A549 (cell line): ENCODE measurements at regions of chr1 and their contacts with region 1.

Region 1: GRCh38 chr1:85259118-85259911 is at the start of gene C1orf52:
- DNase-seq: peak; percentile 56 to 89
- ATAC-seq: peak; percentile 94 to 96
- H3K4me3 ChIP-seq: peak within 1 kb of the TSS; percentile 98
- H3K27ac ChIP-seq: peak within 1 kb of the TSS; percentile 89 to 90
- H3K4me1 ChIP-seq: peaks cover 4% of the 10 kb centered on the region; the same call in 1 of the 3 replicates
- CTCF ChIP-seq: peak; percentile 78
- EP300 ChIP-seq: no peak
- POLR2A ChIP-seq: peak; percentile 86
- RAD21 ChIP-seq: peak; percentile 42 to 58
- polyA plus RNA-seq, gene C1orf52: 19.7 and 22.4 TPM in 2 replicates

Region 2: DNA sequence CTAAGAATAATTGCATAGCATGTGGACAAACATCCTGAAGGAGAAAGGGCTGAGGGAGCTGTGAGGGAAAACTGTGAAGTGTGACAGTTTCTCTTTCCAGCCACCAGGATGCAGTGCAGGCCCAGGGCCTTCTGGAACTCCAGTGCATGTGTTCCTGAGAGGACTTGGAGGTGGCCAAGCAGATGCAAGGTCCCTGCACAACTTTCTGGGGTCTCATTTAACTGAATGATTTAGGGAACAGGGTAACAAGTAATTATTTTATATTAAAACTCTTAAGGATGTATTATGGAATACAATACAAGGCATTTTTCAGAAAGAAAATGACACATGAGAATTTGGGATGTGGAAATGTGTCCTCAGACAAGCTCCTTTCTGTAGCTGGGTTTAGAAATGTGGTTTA is 149.8 kb before region 1 on chr1:
- CTCF ChIA-PET with region 1: interaction called, 46 read pairs
- POLR2A ChIA-PET with region 1: no interaction called
- DNase-seq: peak; percentile 49 to 65
- ATAC-seq: peak; percentile 96 to 97
- H3K4me3 ChIP-seq: no peak overlapping the region
- H3K27ac ChIP-seq: no peak overlapping the region
- H3K4me1 ChIP-seq: no peaks in the 10 kb centered on the region
- CTCF ChIP-seq: peak; percentile 69
- EP300 ChIP-seq: no peak
- POLR2A ChIP-seq: no peak
- RAD21 ChIP-seq: peak; percentile 79 to 85

Region 3: GRCh38 chr1:85276215-85276977 is 17.1 kb after region 1 on chr1 and contains the start of gene BCL10:
- CTCF ChIA-PET with region 1: interaction called, 36 read pairs
- POLR2A ChIA-PET with region 1: interaction called, 28 read pairs
- DNase-seq: peak; percentile 85 to 98
- ATAC-seq: peak; percentile 95 to 99
- H3K4me3 ChIP-seq: peak within 1 kb of the TSS; percentile 97
- H3K27ac ChIP-seq: peak within 1 kb of the TSS; percentile 94
- H3K4me1 ChIP-seq: peaks cover 43% of the 10 kb centered on the region
- CTCF ChIP-seq: no peak
- EP300 ChIP-seq: no peak
- POLR2A ChIP-seq: no peak; the same call in none of the 2 replicates
- RAD21 ChIP-seq: no peak
- polyA plus RNA-seq, gene BCL10: 12.7 and 15.5 TPM in 2 replicates

Region 4: DNA sequence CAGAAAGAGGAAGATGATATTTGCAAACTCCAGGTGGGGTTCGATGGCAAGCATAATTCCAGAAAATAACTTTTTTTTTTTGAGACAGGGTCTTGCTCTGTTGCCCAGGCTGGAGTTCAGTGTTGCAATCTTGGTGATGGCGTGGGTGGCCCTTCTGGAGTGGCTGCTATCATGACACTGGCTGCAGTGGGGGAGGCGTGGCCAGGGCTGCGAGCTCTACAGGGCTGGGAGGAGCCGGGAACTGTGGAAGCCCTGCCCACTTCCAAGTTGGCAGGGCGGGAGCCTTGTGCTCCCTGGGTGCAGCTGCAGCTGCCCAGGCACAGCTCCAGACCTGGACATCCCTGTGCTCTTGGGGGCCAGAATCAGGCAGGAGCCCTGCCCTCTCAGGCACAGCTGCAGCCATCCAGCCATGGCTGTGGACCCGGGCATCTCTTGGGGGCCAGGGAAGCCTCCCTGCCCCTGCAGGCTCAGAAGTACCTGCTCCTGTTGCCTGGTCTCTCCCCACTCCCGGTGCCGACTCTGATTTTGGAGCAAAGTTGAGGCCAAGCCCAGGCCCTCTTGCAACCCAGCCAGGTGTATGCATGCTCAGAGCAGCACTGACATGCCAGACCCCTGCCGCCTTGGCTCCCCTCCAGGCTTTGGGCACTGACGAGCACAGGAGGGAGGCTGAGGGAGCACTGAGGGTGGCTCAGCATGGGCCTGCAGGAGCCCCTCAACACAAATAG is 24.3 kb after region 1 on chr1:
- CTCF ChIA-PET with region 1: interaction called, 27 read pairs
- POLR2A ChIA-PET with region 1: interaction called, 3 read pairs
- DNase-seq: peak in 1 of 2 experiments; percentile 51
- ATAC-seq: peak; percentile 76 to 83; a peak in 5 of 6 replicates
- H3K4me3 ChIP-seq: no peak overlapping the region
- H3K27ac ChIP-seq: 0 out of 6 replicates have a peak overlapping the region, but pooled peaks of 1 of the 2 experiments have one; percentile 37
- H3K4me1 ChIP-seq: peaks cover 17% of the 10 kb centered on the region
- CTCF ChIP-seq: no peak
- EP300 ChIP-seq: no peak
- POLR2A ChIP-seq: no peak
- RAD21 ChIP-seq: no peak

Region 5: GRCh38 chr1:85387781-85388180 is 128.5 kb after region 1 on chr1:
- CTCF ChIA-PET with region 1: no interaction called
- POLR2A ChIA-PET with region 1: no interaction called
- DNase-seq: no peak
- ATAC-seq: no peak
- H3K4me3 ChIP-seq: no peak overlapping the region
- H3K27ac ChIP-seq: no peak overlapping the region
- H3K4me1 ChIP-seq: no peaks in the 10 kb centered on the region
- CTCF ChIP-seq: no peak
- EP300 ChIP-seq: no peak
- POLR2A ChIP-seq: no peak
- RAD21 ChIP-seq: no peak